AG04449 (cell line): ENCODE measurements at regions of chr10 and their contacts with region 1.

Region 1: GRCh38 chr10:29735596-29736318 is 101.0 kb upstream of the SVIL start:
- DNase-seq: no peak
- H3K4me3 ChIP-seq: peak overlapping the region; percentile 67
- CTCF ChIP-seq: peak; percentile 93

Region 2: GRCh38 chr10:29719281-29719675 is 16.5 kb before region 1 on chr10:
- CTCF ChIA-PET with region 1: interaction called, 28 read pairs
- POLR2A ChIA-PET with region 1: no interaction called
- DNase-seq: no peak
- H3K4me3 ChIP-seq: no peak overlapping the region
- CTCF ChIP-seq: no peak

Region 3: GRCh38 chr10:29725133-29725720 is 10.5 kb before region 1 on chr10:
- CTCF ChIA-PET with region 1: interaction called, 28 read pairs
- POLR2A ChIA-PET with region 1: no interaction called
- DNase-seq: no peak
- H3K4me3 ChIP-seq: no peak overlapping the region
- CTCF ChIP-seq: no peak

Region 4: DNA sequence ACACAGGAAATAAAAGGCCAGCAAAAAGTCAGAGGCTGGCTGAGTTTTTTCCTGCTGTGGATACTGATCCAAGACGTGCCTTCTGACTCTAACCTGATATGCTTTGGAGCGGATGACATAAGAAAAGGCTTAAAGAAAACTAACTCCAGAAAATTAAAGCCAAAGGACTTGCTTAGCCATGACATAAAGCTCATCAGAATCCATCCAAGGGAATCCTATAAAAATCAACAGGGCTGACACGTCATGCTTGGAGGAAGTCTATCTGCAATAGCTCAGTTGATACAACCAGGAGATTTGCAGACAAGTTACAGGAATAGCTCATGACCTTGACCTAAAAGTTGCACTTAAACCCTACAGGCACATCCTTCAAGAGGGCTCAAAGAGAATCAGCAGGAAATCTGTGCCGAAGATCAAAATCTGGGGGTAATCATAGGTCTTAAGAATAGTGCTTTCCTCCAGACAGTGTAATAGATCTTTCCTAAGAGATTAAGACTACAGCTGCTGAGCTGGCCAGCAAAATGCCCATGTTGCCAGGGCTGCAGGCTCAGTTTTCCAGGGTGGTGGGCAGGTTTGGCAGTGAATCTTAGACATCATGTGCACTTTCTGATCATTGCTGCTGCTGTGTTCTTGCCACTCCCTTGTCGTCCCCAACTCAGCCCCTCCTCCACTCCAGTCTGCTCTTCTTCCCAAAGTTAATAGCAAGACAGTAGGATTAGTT is 10.5 kb after region 1 on chr10:
- CTCF ChIA-PET with region 1: interaction called, 10 read pairs
- POLR2A ChIA-PET with region 1: no interaction called
- DNase-seq: no peak
- H3K4me3 ChIP-seq: no peak overlapping the region
- CTCF ChIP-seq: no peak